ENCODE measurements at regions of chr1 and their contacts with region 1.

Region 1: GRCh38 chr1:37474046-37474759 is at the start of gene ZC3H12A:
- DNase-seq: peak; percentile 93
- H3K4me3 Mint-ChIP-seq: peak within 1 kb of the TSS; percentile 98
- H3K27ac Mint-ChIP-seq: peak within 1 kb of the TSS; percentile 99
- H3K4me1 Mint-ChIP-seq: peaks cover 53% of the 10 kb centered on the region
- H3K27me3 Mint-ChIP-seq: no peaks in the 10 kb centered on the region
- total RNA-seq, gene ZC3H12A: 29.9 to 31.1 TPM

Region 2: GRCh38 chr1:37498872-37499617 is 24.8 kb after region 1 on chr1:
- CTCF ChIA-PET with region 1: no interaction called
- POLR2A ChIA-PET with region 1: interaction called, 12 read pairs
- DNase-seq: no peak
- H3K4me3 Mint-ChIP-seq: no peak overlapping the region
- H3K27ac Mint-ChIP-seq: no peak overlapping the region
- H3K4me1 Mint-ChIP-seq: peaks cover 4% of the 10 kb centered on the region
- H3K27me3 Mint-ChIP-seq: no peaks in the 10 kb centered on the region

Region 3: GRCh38 chr1:37705399-37705798 is 231.2 kb after region 1 on chr1:
- CTCF ChIA-PET with region 1: no interaction called
- POLR2A ChIA-PET with region 1: no interaction called
- DNase-seq: no peak
- H3K4me3 Mint-ChIP-seq: no peak overlapping the region
- H3K27ac Mint-ChIP-seq: no peak overlapping the region
- H3K4me1 Mint-ChIP-seq: peaks cover 2% of the 10 kb centered on the region
- H3K27me3 Mint-ChIP-seq: no peaks in the 10 kb centered on the region